Heart left ventricle (tissue), 16 donors: ENCODE measurements at regions of chr15 and their contacts with region 1.

Region 1: DNA sequence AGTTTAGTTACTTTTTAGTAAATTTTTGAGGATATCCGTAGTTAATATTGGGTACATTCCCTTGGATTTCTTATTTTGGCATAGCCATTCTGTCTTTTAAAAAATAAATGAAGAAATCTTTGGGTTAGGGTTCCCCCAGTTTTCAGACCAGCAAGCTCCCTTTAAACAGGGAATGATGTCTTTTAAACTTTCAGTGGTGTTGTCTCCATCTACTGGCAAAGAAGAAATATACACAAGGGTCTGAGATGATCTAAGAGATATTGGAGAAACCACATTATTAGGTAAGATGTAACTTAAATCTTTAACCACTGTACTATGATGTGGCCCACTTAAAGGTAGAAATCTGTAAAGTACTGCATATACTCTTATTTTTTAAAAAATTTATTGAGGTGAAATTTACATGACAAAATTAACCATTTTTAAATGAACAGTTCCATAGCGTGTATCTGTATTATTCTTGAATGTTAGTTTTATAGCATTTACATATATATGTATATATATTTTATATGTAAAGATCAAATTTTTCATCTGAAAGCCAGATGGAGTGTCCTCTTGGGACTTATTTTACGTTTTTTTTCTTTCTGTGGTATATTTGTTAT is 35.1 kb upstream of the EIF3J start:
- DNase-seq: no peak
- ATAC-seq: no peak
- H3K4me3 ChIP-seq: no peak overlapping the region
- H3K27ac ChIP-seq: no peak overlapping the region
- H3K4me1 ChIP-seq: no peaks in the 10 kb centered on the region
- H3K27me3 ChIP-seq: no peaks in the 10 kb centered on the region
- CTCF ChIP-seq: peak in 11 of 12 donors; percentile 33 to 66 (median 57)
- POLR2A ChIP-seq: no peak

Region 2: DNA sequence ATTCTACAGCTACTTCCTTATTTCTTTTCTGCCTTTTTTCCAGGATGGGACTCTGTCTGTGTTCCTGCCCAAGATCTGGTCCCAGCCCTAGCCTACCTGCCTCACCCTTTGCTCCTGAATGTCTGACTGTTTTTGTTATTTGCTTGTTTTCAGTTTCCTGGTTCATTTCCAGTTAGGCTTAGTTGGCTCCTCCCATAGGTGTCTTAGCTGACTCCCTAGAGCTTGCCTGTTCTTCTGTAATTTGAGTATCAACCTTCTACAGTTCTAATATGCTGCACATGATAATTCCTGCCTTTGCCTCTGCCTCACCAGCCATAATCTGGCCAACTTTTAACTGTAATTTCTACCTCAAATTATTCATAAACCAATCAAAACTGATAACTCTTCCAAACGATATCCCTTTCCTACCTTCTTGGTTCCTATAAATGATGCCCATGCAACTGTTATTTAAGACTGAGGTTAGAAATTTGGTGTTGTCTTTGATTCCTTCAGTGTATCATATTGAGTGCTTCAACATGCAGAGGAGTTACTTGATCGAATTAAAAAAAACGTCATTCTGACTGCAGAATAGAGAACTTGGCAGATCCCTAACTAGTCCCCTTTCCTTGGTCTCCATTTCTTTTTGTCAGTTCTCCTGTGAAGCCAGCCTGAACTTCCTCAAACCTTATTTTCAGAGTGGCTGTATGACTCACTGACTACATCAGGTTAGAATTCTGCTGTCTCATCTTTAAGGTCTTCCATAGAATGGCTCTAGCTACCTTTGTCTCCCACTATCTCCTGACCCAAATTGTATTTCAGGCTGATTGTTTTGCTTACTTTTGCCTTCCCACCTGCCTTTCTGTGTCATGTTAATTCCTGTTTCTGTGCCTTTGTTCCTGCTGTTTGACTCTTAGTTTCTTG is 205.0 kb before region 1 on chr15:
- intact Hi-C with region 1: loop called in 2 of 10 experiments (anchors 10 kb)
- DNase-seq: no peak
- ATAC-seq: peak in 3 of 4 donors; percentile 45 to 66 (median 58)
- H3K4me3 ChIP-seq: no peak overlapping the region
- H3K27ac ChIP-seq: peak overlapping the region in 1 of 12 donors; percentile 33
- H3K4me1 ChIP-seq: peaks cover 0 to 43% (median 8%) of the 10 kb centered on the region in 12 donors
- H3K27me3 ChIP-seq: no peaks in the 10 kb centered on the region
- CTCF ChIP-seq: no peak
- POLR2A ChIP-seq: no peak